ENCODE measurements at regions of chr4 and their contacts with region 1.

Region 1: GRCh38 chr4:84529169-84529751 is 30.2 kb upstream of the NKX6-1 start:
- H3K4me3 ChIP-seq: no peak overlapping the region
- H3K27ac ChIP-seq: no peak overlapping the region
- H3K4me1 ChIP-seq: peaks cover 4% of the 10 kb centered on the region; the same call in 1 of the 2 replicates
- CTCF ChIP-seq: no peak

Region 2: DNA sequence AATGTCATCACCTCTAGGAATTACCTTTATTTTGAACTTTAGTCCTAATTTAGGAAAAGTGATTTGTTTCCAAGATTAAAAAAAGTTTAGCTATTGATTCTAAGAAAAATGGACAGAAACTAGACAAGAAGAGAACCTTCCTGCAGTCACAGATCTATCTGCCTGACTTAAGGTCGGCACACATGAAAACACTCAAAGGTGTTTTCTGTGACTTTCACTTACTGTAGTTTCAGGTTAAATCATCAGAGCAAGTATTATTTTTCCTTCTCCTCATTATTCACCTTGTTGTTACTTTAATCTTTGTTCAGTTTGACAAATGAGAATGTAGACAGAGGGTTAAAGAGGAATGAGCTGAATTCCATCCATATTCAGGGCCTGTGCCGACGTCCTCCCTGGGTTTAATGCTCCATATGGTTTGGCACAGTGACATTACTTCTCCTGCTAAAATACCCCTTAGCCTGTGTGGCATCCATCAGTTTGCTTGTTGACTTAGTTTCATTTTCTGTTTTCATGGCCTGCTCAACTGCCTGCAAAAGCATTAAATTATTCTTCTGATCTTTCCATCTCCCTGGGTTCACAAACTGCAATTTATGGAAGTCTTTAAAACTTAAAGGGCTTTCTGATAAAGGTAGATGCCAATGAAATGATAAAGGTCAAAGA is 382.8 kb before region 1 on chr4:
- CTCF ChIA-PET with region 1: no interaction called
- POLR2A ChIA-PET with region 1: no interaction called
- H3K4me3 ChIP-seq: no peak overlapping the region
- H3K27ac ChIP-seq: no peak overlapping the region
- H3K4me1 ChIP-seq: no peaks in the 10 kb centered on the region
- CTCF ChIP-seq: no peak

Region 3: GRCh38 chr4:84511703-84512102 is 17.6 kb before region 1 on chr4:
- CTCF ChIA-PET with region 1: interaction called, 17 read pairs
- POLR2A ChIA-PET with region 1: no interaction called
- H3K4me3 ChIP-seq: no peak overlapping the region
- H3K27ac ChIP-seq: no peak overlapping the region
- H3K4me1 ChIP-seq: 0 out of 2 replicates have a peak, but pooled peaks cover 3% of the 10 kb centered on the region
- CTCF ChIP-seq: no peak

Region 4: GRCh38 chr4:84545093-84545492 is 15.8 kb after region 1 on chr4:
- CTCF ChIA-PET with region 1: interaction called, 11 read pairs
- POLR2A ChIA-PET with region 1: no interaction called
- H3K4me3 ChIP-seq: no peak overlapping the region
- H3K27ac ChIP-seq: no peak overlapping the region
- H3K4me1 ChIP-seq: no peaks in the 10 kb centered on the region
- CTCF ChIP-seq: no peak

Region 5: DNA sequence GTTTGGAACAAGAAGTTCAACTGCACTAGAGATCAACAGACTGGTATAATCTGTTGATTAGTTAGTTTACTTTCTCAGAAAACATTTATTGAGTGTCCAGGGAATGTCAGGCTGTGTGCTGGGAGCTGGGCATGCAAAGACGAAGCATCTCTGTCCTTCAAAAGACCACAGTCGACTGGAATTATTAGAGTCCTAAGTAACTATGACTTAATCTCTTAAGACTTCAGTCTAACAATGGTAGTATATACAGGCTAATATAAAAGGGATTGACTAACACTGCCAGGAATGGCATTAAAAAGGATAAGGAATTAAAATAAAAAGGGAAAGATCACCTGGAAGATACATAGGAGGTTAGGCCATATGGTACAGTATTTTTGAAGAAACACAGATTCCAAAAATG is 308.5 kb after region 1 on chr4:
- CTCF ChIA-PET with region 1: no interaction called
- POLR2A ChIA-PET with region 1: no interaction called
- H3K4me3 ChIP-seq: no peak overlapping the region
- H3K27ac ChIP-seq: no peak overlapping the region
- H3K4me1 ChIP-seq: no peaks in the 10 kb centered on the region
- CTCF ChIP-seq: no peak